Transverse colon (tissue), 4 donors: ENCODE measurements at regions of chr13 and their contacts with region 1.

Region 1: DNA sequence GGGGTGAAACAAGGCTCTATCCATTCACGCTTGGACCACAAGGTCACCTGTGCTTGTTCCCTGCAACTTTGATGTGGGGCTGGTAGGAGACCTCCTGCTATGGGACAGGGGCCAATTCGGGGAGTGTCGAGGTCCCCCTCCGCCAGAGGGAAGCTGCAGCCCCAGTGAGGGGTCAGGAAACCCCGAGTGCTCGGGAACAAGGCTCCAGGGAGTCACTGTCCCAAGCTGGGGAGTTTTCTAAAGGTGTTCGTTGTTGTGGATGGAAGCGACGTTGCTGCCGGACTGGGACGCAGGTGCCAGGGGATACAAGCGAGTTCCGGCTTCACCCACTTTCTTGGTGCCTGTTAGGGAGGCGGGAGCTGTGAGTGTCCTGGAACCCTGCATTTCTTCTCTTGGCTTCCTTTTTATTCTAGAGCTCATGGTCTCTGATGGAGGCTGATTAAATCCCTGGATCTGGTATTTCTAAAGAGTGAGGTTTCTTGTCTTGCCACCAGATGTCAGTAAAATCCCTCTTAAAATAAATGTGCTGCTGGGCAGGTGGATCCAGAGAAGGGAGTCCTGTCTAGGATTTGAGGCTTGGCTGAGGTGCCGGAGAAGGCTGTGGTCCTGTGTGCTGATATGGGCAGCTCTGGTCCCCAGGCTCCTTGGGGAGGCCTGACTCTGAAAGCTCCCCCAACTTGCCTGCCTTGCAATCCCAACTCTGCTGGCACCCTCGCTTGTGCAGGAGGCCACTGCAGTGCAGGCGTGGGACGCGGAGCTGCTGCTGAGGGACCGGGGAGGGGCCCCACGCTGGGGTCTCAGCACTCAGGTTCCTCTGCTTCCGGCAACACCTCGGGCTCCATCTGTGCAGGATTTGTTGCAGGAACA is 153.9 kb downstream of the TEX29 start:
- DNase-seq: no peak
- H3K4me3 ChIP-seq: no peak overlapping the region
- H3K27ac ChIP-seq: no peak overlapping the region
- H3K4me1 ChIP-seq: no peaks in the 10 kb centered on the region
- H3K27me3 ChIP-seq: peaks cover 3% of the 10 kb centered on the region
- CTCF ChIP-seq: peak; percentile 38 to 57 (median 48)
- EP300 ChIP-seq: no peak
- POLR2A ChIP-seq: no peak

Region 2: GRCh38 chr13:111031531-111031961 is 442.8 kb before region 1 on chr13:
- in situ Hi-C with region 1: no loop called
- intact Hi-C with region 1: no loop called
- DNase-seq: peak; percentile 17
- H3K4me3 ChIP-seq: no peak overlapping the region
- H3K27ac ChIP-seq: no peak overlapping the region
- H3K4me1 ChIP-seq: no peaks in the 10 kb centered on the region
- H3K27me3 ChIP-seq: no peaks in the 10 kb centered on the region
- CTCF ChIP-seq: no peak
- EP300 ChIP-seq: no peak
- POLR2A ChIP-seq: no peak

Region 3: GRCh38 chr13:112443995-112444860 is 969.9 kb after region 1 on chr13:
- in situ Hi-C with region 1: loop called (anchors 10 to 25 kb)
- intact Hi-C with region 1: loop called (anchors 2 kb)
- DNase-seq: peak; percentile 71
- H3K4me3 ChIP-seq: no peak overlapping the region
- H3K27ac ChIP-seq: no peak overlapping the region
- H3K4me1 ChIP-seq: no peaks in the 10 kb centered on the region
- H3K27me3 ChIP-seq: peaks cover 48% of the 10 kb centered on the region
- CTCF ChIP-seq: peak; percentile 72 to 88 (median 84)
- EP300 ChIP-seq: no peak
- POLR2A ChIP-seq: no peak

Region 4: GRCh38 chr13:112606109-112607001 is 1132.0 kb after region 1 on chr13:
- in situ Hi-C with region 1: loop called in 2 of 4 experiments (anchors 25 kb)
- intact Hi-C with region 1: no loop called
- DNase-seq: peak; percentile 95
- H3K4me3 ChIP-seq: peak overlapping the region; percentile 27 to 48 (median 30)
- H3K27ac ChIP-seq: peak overlapping the region; percentile 63 to 78 (median 76)
- H3K4me1 ChIP-seq: peaks cover 0 to 7% (median 2%) of the 10 kb centered on the region in 4 donors
- H3K27me3 ChIP-seq: peaks cover 17% of the 10 kb centered on the region
- CTCF ChIP-seq: peak; percentile 87 to 95 (median 91)
- EP300 ChIP-seq: no peak
- POLR2A ChIP-seq: no peak